HCT116 (cell line): ENCODE measurements at regions of chr13 and their contacts with region 1.

Region 1: DNA sequence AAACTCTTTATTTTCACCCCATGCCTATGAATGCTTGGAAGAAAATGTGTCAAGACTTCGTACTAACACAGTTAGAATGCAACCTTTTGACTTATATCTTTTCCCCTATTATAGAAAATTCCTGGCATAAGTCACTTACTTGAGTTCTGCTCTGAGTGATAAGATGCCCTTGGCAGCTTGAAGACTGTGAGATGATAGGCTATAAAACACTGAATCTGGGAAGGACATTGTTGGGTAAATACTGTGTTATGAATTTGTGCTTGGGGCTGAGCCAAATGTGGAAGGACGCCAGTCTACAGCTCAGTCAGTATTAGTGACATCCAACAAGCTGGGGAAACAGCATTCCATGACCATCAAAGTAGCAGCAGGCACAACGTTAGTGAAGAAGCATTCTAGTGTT is 368.0 kb upstream of the SGCG start:
- DNase-seq: no peak
- ATAC-seq: no peak
- H3K4me3 ChIP-seq: no peak overlapping the region
- H3K27ac ChIP-seq: no peak overlapping the region
- H3K4me1 ChIP-seq: no peaks in the 10 kb centered on the region
- H3K27me3 ChIP-seq: no peaks in the 10 kb centered on the region
- CTCF ChIP-seq: no peak
- POLR2A ChIP-seq: no peak
- RAD21 ChIP-seq: no peak

Region 2: DNA sequence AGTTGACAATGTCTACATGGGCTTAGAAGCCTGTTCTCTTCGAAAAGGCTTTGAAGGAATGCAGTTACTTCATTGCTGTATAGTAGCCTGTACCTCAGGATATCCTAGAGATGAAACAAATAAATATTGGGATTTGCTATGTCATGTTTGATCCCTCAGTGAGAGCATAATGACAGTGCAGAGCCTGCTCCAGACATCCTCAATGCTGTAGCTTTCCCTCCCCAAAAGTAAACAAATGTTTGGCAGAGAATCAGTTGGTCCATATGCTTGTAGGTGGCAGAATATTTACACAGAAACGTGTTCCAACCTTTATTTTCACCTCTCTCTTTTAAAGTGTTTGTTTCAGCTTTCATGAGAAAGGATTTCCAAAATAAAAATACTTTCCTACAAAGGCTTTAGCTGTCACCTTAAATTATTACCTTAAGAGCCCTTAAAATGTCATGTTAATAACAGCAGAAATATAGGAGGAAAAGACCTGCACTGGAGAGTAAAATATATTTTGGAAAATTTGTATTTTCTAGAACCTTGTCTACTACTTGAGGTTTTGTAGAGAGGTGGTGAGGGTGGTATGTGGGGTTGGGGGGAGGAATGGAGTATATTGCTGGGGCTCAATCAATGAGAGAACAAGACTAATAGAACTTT is 147.2 kb before region 1 on chr13:
- CTCF ChIA-PET with region 1: no interaction called
- POLR2A ChIA-PET with region 1: no interaction called
- RAD21 ChIA-PET with region 1: no interaction called
- intact Hi-C with region 1: no loop called
- DNase-seq: no peak
- ATAC-seq: no peak
- H3K4me3 ChIP-seq: no peak overlapping the region
- H3K27ac ChIP-seq: no peak overlapping the region
- H3K4me1 ChIP-seq: no peaks in the 10 kb centered on the region
- H3K27me3 ChIP-seq: no peaks in the 10 kb centered on the region
- CTCF ChIP-seq: no peak
- POLR2A ChIP-seq: no peak
- RAD21 ChIP-seq: no peak

Region 3: GRCh38 chr13:23020223-23020843 is 207.5 kb after region 1 on chr13:
- CTCF ChIA-PET with region 1: interaction called, 3 read pairs
- POLR2A ChIA-PET with region 1: no interaction called
- RAD21 ChIA-PET with region 1: no interaction called
- intact Hi-C with region 1: loop called (anchors 5 kb)
- DNase-seq: peak; percentile 61
- ATAC-seq: peak; percentile 100
- H3K4me3 ChIP-seq: no peak overlapping the region
- H3K27ac ChIP-seq: no peak overlapping the region
- H3K4me1 ChIP-seq: no peaks in the 10 kb centered on the region
- H3K27me3 ChIP-seq: no peaks in the 10 kb centered on the region
- CTCF ChIP-seq: peak; percentile 40 to 86 (median 84); a peak in 5 of 6 replicates
- POLR2A ChIP-seq: no peak
- RAD21 ChIP-seq: peak; percentile 49